CD4-positive, alpha-beta T cell (primary cell): ENCODE measurements at regions of chr17 and their contacts with region 1.

Region 1: GRCh38 chr17:40062329-40063186 is at the start of gene THRA:
- DNase-seq: peak; percentile 44 to 90 (median 72)
- ATAC-seq: peak; percentile 88
- H3K4me3 ChIP-seq: peak within 1 kb of the TSS; percentile 86
- H3K4me3 Mint-ChIP-seq: peak within 1 kb of the TSS; percentile 93
- H3K27ac ChIP-seq: peak within 1 kb of the TSS in 1 of 2 donors; percentile 69
- H3K27ac Mint-ChIP-seq: peak within 1 kb of the TSS; percentile 96
- H3K4me1 ChIP-seq: peaks cover 49% of the 10 kb centered on the region
- H3K4me1 Mint-ChIP-seq: peaks cover 50% of the 10 kb centered on the region
- H3K27me3 ChIP-seq: peaks cover 0 to 6% of the 10 kb centered on the region in 2 experiments
- H3K27me3 Mint-ChIP-seq: no peaks in the 10 kb centered on the region
- CTCF ChIP-seq: no peak
- total RNA-seq, gene THRA: 35.2 to 36.4 TPM

Region 2: GRCh38 chr17:39894681-39895376 is 167.7 kb before region 1 on chr17:
- CTCF ChIA-PET with region 1: no interaction called
- POLR2A ChIA-PET with region 1: no interaction called
- intact Hi-C with region 1: no loop called
- DNase-seq: no peak
- ATAC-seq: no peak
- H3K4me3 ChIP-seq: no peak overlapping the region
- H3K4me3 Mint-ChIP-seq: no peak overlapping the region
- H3K27ac ChIP-seq: no peak overlapping the region
- H3K27ac Mint-ChIP-seq: no peak overlapping the region
- H3K4me1 ChIP-seq: no peaks in the 10 kb centered on the region
- H3K4me1 Mint-ChIP-seq: peaks cover 4% of the 10 kb centered on the region
- H3K27me3 ChIP-seq: no peaks in the 10 kb centered on the region
- H3K27me3 Mint-ChIP-seq: no peaks in the 10 kb centered on the region
- CTCF ChIP-seq: no peak

Region 3: GRCh38 chr17:40075201-40075941 is 12.8 kb after region 1 on chr17:
- CTCF ChIA-PET with region 1: interaction called, 26 read pairs
- POLR2A ChIA-PET with region 1: interaction called, 18 read pairs
- intact Hi-C with region 1: loop called (anchors 1 kb)
- DNase-seq: peak; percentile 58 to 82 (median 66)
- ATAC-seq: peak; percentile 91
- H3K4me3 ChIP-seq: no peak overlapping the region
- H3K4me3 Mint-ChIP-seq: no peak overlapping the region
- H3K27ac ChIP-seq: no peak overlapping the region
- H3K27ac Mint-ChIP-seq: peak overlapping the region; percentile 10
- H3K4me1 ChIP-seq: peaks cover 47% of the 10 kb centered on the region
- H3K4me1 Mint-ChIP-seq: peaks cover 50% of the 10 kb centered on the region
- H3K27me3 ChIP-seq: no peaks in the 10 kb centered on the region
- H3K27me3 Mint-ChIP-seq: no peaks in the 10 kb centered on the region
- CTCF ChIP-seq: peak; percentile 89

Region 4: DNA sequence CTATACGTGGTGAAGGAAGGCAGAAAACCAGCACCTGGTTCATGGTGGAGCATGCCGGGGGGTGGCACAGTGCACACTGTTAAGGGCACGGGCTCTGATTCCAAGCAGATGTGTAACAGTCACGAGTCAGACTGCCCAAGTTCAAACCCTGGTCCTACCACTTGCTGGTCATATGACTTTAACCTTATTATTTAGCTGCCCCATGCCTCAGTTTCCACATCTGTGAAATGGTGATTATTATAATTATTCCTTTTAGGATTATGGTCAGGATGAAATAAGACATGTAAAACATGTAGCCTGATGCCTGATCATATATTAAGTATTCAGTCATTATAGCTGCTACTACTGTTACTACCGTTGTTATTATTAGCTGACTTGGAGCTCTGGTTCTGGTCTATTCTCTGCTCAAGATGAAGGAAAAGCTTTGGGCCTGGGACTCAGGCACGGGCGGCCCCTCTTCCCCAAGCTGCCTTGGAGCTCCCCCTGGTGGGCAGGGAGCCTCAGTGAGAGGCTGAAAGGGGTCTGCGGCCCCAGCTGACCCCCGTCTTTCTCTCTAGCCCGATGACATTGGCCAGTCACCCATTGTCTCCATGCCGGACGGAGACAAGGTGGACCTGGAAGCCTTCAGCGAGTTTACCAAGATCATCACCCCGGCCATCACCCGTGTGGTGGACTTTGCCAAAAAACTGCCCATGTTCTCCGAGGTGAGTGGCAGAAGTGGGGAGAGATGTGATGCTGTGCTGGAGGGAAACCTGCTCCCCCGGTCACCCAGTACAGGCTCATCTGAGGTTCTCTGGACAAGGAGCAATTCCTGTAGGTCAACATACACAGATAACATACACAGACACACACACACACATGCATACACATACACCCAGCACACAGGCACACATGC is 23.8 kb after region 1 on chr17:
- CTCF ChIA-PET with region 1: interaction called, 13 read pairs
- POLR2A ChIA-PET with region 1: no interaction called
- intact Hi-C with region 1: loop called in 1 of 2 experiments (anchors 2 kb)
- DNase-seq: peak; percentile 46 to 78 (median 59)
- ATAC-seq: peak; percentile 68
- H3K4me3 ChIP-seq: no peak overlapping the region
- H3K4me3 Mint-ChIP-seq: no peak overlapping the region
- H3K27ac ChIP-seq: no peak overlapping the region
- H3K27ac Mint-ChIP-seq: no peak overlapping the region
- H3K4me1 ChIP-seq: peaks cover 9% of the 10 kb centered on the region
- H3K4me1 Mint-ChIP-seq: peaks cover 15% of the 10 kb centered on the region
- H3K27me3 ChIP-seq: no peaks in the 10 kb centered on the region
- H3K27me3 Mint-ChIP-seq: no peaks in the 10 kb centered on the region
- CTCF ChIP-seq: peak; percentile 89

Region 5: DNA sequence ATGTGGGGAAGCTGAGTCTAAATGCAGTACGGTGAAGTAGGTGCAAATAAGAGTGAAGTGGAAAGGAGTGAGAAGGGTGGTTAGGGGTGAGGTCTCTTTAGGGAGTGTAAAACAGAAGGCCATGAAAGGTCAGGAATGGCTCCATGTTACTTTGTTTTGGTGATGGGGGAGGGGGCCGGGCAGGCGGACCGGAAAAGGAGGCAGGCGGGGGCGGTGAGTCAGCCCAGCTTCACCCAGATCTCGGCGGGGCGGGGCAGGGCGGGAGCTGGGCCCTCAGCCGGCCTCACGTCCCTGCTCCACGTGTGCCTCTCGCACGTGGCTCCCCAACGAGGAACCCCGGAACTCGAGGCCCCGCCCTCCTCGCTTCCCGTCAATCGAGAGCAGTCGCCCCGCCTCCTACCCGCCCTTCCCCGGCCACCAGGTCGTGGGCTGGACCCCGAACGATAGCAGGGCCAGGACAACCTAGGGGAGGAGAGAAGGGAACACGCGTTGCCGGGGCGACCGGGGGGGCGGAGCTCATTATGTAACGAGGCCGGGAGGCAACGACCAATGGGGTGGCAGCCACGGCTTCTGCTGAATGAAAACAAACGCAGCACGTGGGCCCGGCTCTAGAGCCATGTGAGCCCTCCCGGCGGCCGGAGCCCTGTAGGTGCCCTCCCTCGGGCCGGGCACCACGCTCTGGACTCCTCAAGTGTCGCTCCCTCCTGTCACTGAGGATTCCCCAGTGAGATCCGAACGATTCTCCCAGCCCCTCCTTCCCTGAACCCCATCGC is 36.5 kb after region 1 on chr17:
- CTCF ChIA-PET with region 1: no interaction called
- POLR2A ChIA-PET with region 1: interaction called, 34 read pairs
- intact Hi-C with region 1: loop called in 1 of 2 experiments (anchors 5 kb)
- DNase-seq: peak; percentile 99 to 100 (median 99)
- ATAC-seq: peak; percentile 63
- H3K4me3 ChIP-seq: peak overlapping the region; percentile 85
- H3K4me3 Mint-ChIP-seq: peak overlapping the region; percentile 97
- H3K27ac ChIP-seq: peak overlapping the region; percentile 94 to 96
- H3K27ac Mint-ChIP-seq: peak overlapping the region; percentile 91
- H3K4me1 ChIP-seq: peaks cover 97% of the 10 kb centered on the region
- H3K4me1 Mint-ChIP-seq: peaks cover 90% of the 10 kb centered on the region
- H3K27me3 ChIP-seq: no peaks in the 10 kb centered on the region
- H3K27me3 Mint-ChIP-seq: no peaks in the 10 kb centered on the region
- CTCF ChIP-seq: no peak

Region 6: GRCh38 chr17:40107522-40108174 is 45.1 kb after region 1 on chr17:
- CTCF ChIA-PET with region 1: interaction called, 38 read pairs
- POLR2A ChIA-PET with region 1: interaction called, 48 read pairs
- intact Hi-C with region 1: loop called (anchors 2 to 5 kb)
- DNase-seq: peak in 3 of 14 experiments; percentile 38 to 70 (median 70)
- ATAC-seq: peak; percentile 5
- H3K4me3 ChIP-seq: peak overlapping the region; percentile 16
- H3K4me3 Mint-ChIP-seq: peak overlapping the region; percentile 82
- H3K27ac ChIP-seq: peak overlapping the region; percentile 94 to 95
- H3K27ac Mint-ChIP-seq: peak overlapping the region; percentile 99
- H3K4me1 ChIP-seq: peaks cover 100% of the 10 kb centered on the region
- H3K4me1 Mint-ChIP-seq: peaks cover 98% of the 10 kb centered on the region
- H3K27me3 ChIP-seq: no peaks in the 10 kb centered on the region
- H3K27me3 Mint-ChIP-seq: no peaks in the 10 kb centered on the region
- CTCF ChIP-seq: no peak

Region 7: GRCh38 chr17:40168262-40168832 is 105.8 kb after region 1 on chr17:
- CTCF ChIA-PET with region 1: interaction called, 7 read pairs
- POLR2A ChIA-PET with region 1: interaction called, 3 read pairs
- intact Hi-C with region 1: loop called (anchors 1 to 2 kb)
- DNase-seq: peak in 8 of 14 experiments; percentile 14 to 82 (median 43)
- ATAC-seq: peak; percentile 89
- H3K4me3 ChIP-seq: no peak overlapping the region
- H3K4me3 Mint-ChIP-seq: no peak overlapping the region
- H3K27ac ChIP-seq: no peak overlapping the region
- H3K27ac Mint-ChIP-seq: peak overlapping the region; percentile 80
- H3K4me1 ChIP-seq: no peaks in the 10 kb centered on the region
- H3K4me1 Mint-ChIP-seq: peaks cover 9% of the 10 kb centered on the region
- H3K27me3 ChIP-seq: no peaks in the 10 kb centered on the region
- H3K27me3 Mint-ChIP-seq: no peaks in the 10 kb centered on the region
- CTCF ChIP-seq: peak; percentile 87